CD4-positive, alpha-beta memory T cell (primary cell): ENCODE measurements at regions of chr12 and their contacts with region 1.

Region 1: DNA sequence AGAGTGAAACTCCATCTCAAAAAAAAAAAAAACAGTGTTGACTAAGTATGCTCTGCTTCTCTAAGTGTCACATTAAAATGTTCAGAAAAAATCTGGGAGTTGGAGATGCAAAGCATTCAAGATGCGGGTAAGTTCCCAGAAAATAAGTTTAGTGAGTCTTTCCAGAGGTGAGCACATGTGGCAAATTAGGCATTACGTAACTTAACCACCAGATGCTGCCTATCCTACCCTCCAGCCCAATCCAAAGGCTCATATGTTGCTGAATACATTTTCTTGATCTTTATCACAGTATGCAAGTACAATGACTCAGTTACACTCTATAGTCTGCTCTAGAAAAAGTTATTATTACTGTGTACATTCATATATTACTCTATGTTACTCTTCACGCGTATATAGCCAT is 3.6 kb downstream of the SLC2A14 start:
- DNase-seq: no peak
- H3K4me3 ChIP-seq: no peak overlapping the region
- H3K4me3 Mint-ChIP-seq: no peak overlapping the region
- H3K27ac ChIP-seq: no peak overlapping the region
- H3K27ac Mint-ChIP-seq: no peak overlapping the region
- H3K4me1 ChIP-seq: no peaks in the 10 kb centered on the region
- H3K4me1 Mint-ChIP-seq: peaks cover 0 to 3% (median 0%) of the 10 kb centered on the region in 4 donors
- H3K27me3 ChIP-seq: no peaks in the 10 kb centered on the region
- H3K27me3 Mint-ChIP-seq: peaks cover 20% of the 10 kb centered on the region in 2 donors

Region 2: DNA sequence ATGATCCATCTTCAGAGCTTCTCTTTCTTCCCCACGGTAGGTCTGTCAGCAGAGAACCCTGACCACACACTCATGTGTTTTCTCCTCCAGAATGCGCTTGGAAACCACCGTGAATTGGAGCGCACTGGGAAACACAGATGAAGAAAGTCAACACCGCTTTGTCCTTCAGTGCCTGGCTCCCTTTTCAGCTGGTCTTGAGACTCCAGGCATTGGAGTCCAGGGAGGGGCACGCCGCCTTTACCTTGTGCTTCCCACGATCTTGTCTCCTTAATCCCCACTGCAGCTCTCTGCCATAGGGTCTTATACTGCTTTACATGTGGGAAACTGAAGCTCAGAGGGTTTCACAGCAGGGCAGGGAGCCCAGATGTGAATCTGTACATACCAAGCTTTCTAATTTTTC is 357.2 kb after region 1 on chr12:
- CTCF ChIA-PET with region 1: no interaction called
- POLR2A ChIA-PET with region 1: no interaction called
- intact Hi-C with region 1: loop called (anchors 10 kb)
- DNase-seq: no peak
- H3K4me3 ChIP-seq: no peak overlapping the region
- H3K4me3 Mint-ChIP-seq: no peak overlapping the region
- H3K27ac ChIP-seq: no peak overlapping the region
- H3K27ac Mint-ChIP-seq: peak overlapping the region in 1 of 7 donors; percentile 19
- H3K4me1 ChIP-seq: no peaks in the 10 kb centered on the region
- H3K4me1 Mint-ChIP-seq: peaks cover 0 to 14% (median 0%) of the 10 kb centered on the region in 4 donors
- H3K27me3 ChIP-seq: no peaks in the 10 kb centered on the region
- H3K27me3 Mint-ChIP-seq: peaks cover 2 to 3% of the 10 kb centered on the region in 2 donors